PC-3 (cell line): ENCODE measurements at regions of chr1 and their contacts with region 1.

Region 1: DNA sequence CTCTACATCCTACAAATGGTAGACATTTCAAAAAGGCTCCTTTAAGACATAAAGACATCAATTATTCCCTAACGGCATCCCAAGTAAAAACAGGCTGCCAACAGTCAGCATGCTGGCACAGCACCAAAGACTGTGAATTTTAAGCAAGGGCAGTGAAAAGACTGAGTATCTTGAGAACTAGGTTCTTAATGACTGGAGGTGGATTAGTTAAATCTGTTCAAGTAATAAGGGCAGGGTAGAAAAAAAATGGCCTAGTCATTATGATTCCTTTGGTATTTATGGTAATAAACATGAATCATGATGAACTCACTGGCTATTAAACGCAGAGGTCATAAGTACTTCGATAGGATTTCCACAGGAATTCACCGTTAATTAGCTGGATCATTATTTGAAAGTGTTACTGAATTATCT is 75.2 kb downstream of the KIFAP3 start:
- DNase-seq: peak; percentile 84
- ATAC-seq: peak; percentile 77
- H3K4me3 ChIP-seq: no peak overlapping the region
- H3K27ac ChIP-seq: peak overlapping the region; percentile 53
- H3K4me1 ChIP-seq: peaks cover 23% of the 10 kb centered on the region
- H3K27me3 ChIP-seq: no peaks in the 10 kb centered on the region
- CTCF ChIP-seq: no peak

Region 2: DNA sequence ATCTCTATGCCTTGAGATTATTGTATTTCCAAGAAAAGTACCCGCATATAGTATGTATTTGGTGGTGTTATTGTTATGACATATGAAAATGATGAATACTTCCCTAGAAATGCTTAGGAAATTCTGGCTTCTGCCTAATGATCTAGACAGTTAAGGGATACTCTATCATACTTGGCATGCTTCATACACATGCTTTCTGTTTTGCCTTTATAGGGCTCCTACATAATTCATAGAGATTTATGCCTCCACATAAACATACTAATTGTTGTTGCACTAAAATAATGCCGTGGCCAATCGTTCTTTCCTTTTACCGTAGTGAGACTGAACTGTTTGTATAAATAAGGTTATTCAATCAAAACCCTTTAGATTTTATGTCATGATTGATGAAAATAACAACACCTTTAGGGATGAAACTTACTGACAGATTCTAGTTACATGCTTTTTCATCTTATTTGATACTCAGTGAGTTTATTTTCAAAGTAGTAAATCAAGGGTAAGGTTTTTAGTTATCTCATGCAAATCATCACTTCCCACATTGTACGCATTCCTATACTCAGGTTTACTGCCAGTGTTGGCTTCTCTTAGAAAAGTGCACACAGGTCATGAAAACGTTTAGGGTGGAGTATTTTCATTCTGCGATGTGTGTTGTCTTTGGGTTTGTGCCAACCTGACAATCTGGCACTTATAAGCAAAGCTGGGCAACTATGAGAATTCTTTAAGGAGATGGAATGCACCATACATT is 65.2 kb before region 1 on chr1:
- CTCF ChIA-PET with region 1: no interaction called
- POLR2A ChIA-PET with region 1: no interaction called
- intact Hi-C with region 1: loop called (anchors 5 kb)
- DNase-seq: peak; percentile 72
- ATAC-seq: peak; percentile 46
- H3K4me3 ChIP-seq: no peak overlapping the region
- H3K27ac ChIP-seq: no peak overlapping the region
- H3K4me1 ChIP-seq: peaks cover 19% of the 10 kb centered on the region
- H3K27me3 ChIP-seq: no peaks in the 10 kb centered on the region
- CTCF ChIP-seq: no peak

Region 3: GRCh38 chr1:169941982-169942830 is 57.1 kb before region 1 on chr1:
- CTCF ChIA-PET with region 1: no interaction called
- POLR2A ChIA-PET with region 1: no interaction called
- intact Hi-C with region 1: loop called (anchors 1 kb)
- DNase-seq: peak; percentile 60
- ATAC-seq: peak; percentile 93
- H3K4me3 ChIP-seq: no peak overlapping the region
- H3K27ac ChIP-seq: peak overlapping the region; percentile 36
- H3K4me1 ChIP-seq: peaks cover 12% of the 10 kb centered on the region
- H3K27me3 ChIP-seq: no peaks in the 10 kb centered on the region
- CTCF ChIP-seq: no peak

Region 4: GRCh38 chr1:170074250-170075157 is 75.2 kb after region 1 on chr1 and contains the start of gene KIFAP3:
- CTCF ChIA-PET with region 1: no interaction called
- POLR2A ChIA-PET with region 1: no interaction called
- intact Hi-C with region 1: loop called (anchors 2 kb)
- DNase-seq: peak; percentile 95
- ATAC-seq: peak; percentile 95
- H3K4me3 ChIP-seq: peak within 1 kb of the TSS; percentile 74
- H3K27ac ChIP-seq: 0 out of 2 replicates have a peak within 1 kb of the TSS, but pooled peaks have one; percentile 19
- H3K4me1 ChIP-seq: peaks cover 10% of the 10 kb centered on the region; the same call in 1 of the 2 replicates
- H3K27me3 ChIP-seq: no peaks in the 10 kb centered on the region
- CTCF ChIP-seq: peak; percentile 55
- total RNA-seq, gene KIFAP3: 5.1 and 6.9 TPM in 2 replicates

Region 5: DNA sequence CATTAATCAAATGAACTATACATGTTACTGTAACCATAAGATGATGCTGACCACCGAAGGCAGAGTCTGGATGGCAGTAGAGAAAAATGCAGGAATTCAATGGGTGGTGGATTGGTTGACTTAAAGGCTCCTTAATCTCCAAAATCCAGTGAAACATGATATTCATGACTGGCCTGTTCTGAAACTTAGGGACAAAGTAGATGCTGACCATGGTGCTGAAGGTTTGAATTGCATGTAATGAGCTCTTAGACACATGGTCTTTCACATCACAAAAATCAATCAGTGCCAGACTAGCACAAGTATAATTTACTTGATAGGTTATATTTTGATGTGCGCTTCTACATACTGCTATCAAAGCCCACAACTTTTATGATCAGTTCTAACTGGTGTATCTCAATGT is 115.6 kb after region 1 on chr1:
- CTCF ChIA-PET with region 1: no interaction called
- POLR2A ChIA-PET with region 1: no interaction called
- intact Hi-C with region 1: no loop called
- DNase-seq: peak; percentile 43
- ATAC-seq: no peak
- H3K4me3 ChIP-seq: no peak overlapping the region
- H3K27ac ChIP-seq: no peak overlapping the region
- H3K4me1 ChIP-seq: no peaks in the 10 kb centered on the region
- H3K27me3 ChIP-seq: no peaks in the 10 kb centered on the region
- CTCF ChIP-seq: no peak

Region 6: DNA sequence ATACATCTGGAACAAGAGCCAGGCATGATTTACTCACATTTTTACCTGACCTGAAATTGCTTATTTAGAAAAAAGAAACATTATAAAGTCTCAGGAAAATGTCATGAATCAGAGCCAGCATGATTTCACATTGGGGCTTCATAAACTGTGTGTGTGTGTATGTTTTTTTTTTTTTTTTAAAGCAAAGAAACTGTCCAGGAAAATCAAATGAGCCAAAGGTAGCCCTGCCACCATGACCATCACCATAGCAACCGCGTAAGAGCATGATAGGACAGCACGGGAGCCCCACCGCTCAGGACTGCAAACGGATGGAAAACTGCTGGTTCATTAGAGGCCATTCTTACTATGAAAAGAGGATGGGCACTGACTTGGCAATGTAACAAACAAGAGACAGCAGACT is 285.6 kb after region 1 on chr1:
- CTCF ChIA-PET with region 1: no interaction called
- POLR2A ChIA-PET with region 1: no interaction called
- intact Hi-C with region 1: no loop called
- DNase-seq: no peak
- ATAC-seq: no peak
- H3K4me3 ChIP-seq: no peak overlapping the region
- H3K27ac ChIP-seq: no peak overlapping the region
- H3K4me1 ChIP-seq: no peaks in the 10 kb centered on the region
- H3K27me3 ChIP-seq: peaks cover 39% of the 10 kb centered on the region
- CTCF ChIP-seq: no peak